Breast epithelium (tissue), 4 donors: ENCODE measurements at regions of chr1 and their contacts with region 1.

Region 1: GRCh38 chr1:26743426-26744059 is 44.2 kb upstream of the PIGV start:
- DNase-seq: no peak
- H3K4me3 ChIP-seq: no peak overlapping the region
- H3K27ac ChIP-seq: peak overlapping the region; percentile 57 to 63
- H3K4me1 ChIP-seq: peaks cover 0 to 4% of the 10 kb centered on the region in 2 donors
- H3K27me3 ChIP-seq: no peaks in the 10 kb centered on the region
- CTCF ChIP-seq: no peak
- POLR2A ChIP-seq: no peak

Region 2: DNA sequence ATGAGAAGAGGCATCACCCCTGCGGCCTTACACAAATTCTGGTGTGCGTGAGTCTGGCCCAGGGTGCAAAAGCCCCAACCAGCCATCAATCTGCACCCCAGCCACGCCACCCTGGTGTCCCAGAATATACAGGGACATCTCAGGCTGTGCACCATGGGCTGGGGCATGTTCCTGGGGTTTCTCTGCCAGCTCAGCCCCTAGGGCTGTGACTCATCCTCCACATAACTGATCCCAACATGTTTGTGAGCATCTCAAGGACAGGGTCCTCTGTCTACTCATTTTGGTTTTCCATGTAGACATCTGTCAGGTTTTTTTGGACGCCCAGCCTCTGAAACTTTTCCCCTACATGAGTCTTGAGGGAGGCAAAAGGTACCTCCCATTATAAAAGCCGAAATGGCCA is 371.5 kb before region 1 on chr1:
- intact Hi-C with region 1: no loop called
- DNase-seq: no peak
- H3K4me3 ChIP-seq: no peak overlapping the region
- H3K27ac ChIP-seq: no peak overlapping the region
- H3K4me1 ChIP-seq: no peaks in the 10 kb centered on the region
- H3K27me3 ChIP-seq: no peaks in the 10 kb centered on the region
- CTCF ChIP-seq: no peak
- POLR2A ChIP-seq: no peak

Region 3: GRCh38 chr1:26848947-26849774 is 105.6 kb after region 1 on chr1:
- intact Hi-C with region 1: loop called (anchors 2 kb)
- DNase-seq: no peak
- H3K4me3 ChIP-seq: no peak overlapping the region
- H3K27ac ChIP-seq: peak overlapping the region; percentile 30 to 61
- H3K4me1 ChIP-seq: no peaks in the 10 kb centered on the region
- H3K27me3 ChIP-seq: no peaks in the 10 kb centered on the region
- CTCF ChIP-seq: no peak
- POLR2A ChIP-seq: no peak